ENCODE measurements at regions of chr1 and their contacts with region 1.

Region 1: DNA sequence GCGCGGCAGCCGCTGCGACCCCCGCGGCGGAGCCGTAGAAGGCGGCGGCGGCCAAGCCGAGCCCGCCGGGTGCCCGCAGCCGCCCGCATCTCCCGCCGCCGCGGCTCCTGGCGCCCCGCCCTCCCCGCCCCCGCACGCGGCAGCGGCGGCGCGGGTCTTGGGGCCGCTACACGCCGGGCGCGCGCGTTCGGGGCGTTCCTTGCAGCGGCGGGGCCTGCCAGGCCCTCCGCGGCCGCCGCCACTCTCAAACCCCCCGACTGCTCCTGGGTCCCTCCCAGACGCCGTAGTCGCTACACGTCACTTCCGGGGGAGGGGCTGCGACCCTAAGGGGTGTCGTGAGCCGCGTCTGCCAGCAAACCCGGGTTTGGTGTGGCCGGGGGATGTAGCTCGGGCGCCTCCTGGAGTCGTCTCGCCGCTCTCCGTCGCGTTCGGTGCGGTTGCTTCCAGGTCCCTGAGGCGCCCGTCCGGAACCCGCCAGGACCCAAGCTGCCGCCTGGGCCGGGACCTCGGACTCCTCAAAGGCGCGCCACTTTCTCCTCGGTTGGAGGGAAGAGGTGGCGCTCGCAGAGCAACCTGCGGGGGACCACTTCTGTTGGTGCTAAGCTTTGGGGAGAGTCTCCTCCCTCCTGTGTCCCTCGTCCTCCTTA is at the start of gene ELK4:
- DNase-seq: peak; percentile 100
- ATAC-seq: peak; percentile 84
- H3K4me3 Mint-ChIP-seq: peak within 1 kb of the TSS; percentile 95
- H3K27ac Mint-ChIP-seq: peak within 1 kb of the TSS; percentile 99
- H3K4me1 Mint-ChIP-seq: peaks cover 32% of the 10 kb centered on the region
- H3K27me3 Mint-ChIP-seq: no peaks in the 10 kb centered on the region
- total RNA-seq, gene ELK4: 54.0 to 57.4 TPM

Region 2: DNA sequence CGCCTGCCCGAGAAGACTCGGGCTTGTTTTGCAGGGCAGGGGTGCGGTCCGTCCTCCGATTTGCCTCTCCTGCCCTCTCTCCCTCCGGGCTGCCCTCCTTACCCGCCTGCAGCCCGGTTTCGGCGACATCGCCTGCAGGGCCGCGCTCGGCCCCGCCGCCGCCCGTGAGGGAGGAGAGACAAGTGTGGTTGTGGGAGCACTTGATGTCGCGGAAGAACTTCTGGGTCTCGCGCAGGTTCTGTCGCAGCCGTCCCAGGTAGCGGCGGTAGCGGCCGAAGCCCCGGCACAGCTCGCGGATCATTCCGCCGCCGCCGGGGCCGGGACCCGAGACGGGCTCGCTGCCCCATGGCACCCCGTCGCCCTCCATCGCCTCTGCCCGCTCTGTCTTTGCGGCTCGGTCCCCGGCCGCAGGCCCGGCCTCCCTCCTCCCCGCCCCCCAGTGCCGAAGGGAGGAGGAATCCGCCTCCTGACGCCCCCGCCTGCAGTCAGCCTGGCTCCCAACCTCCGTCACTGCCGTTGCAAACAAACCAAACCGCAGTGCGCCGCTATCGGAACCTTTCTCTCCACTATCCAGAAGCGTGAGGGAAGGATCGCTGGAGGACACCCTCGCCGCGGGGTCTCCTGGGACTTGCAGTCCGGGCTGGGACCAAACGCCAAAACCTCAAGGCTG is 420.5 kb before region 1 on chr1 and contains the start of gene DSTYK:
- CTCF ChIA-PET with region 1: no interaction called
- POLR2A ChIA-PET with region 1: no interaction called
- intact Hi-C with region 1: loop called in 1 of 2 experiments (anchors 1 kb)
- DNase-seq: peak; percentile 97
- ATAC-seq: peak; percentile 90
- H3K4me3 Mint-ChIP-seq: peak within 1 kb of the TSS; percentile 97
- H3K27ac Mint-ChIP-seq: peak within 1 kb of the TSS; percentile 95
- H3K4me1 Mint-ChIP-seq: peaks cover 54% of the 10 kb centered on the region
- H3K27me3 Mint-ChIP-seq: no peaks in the 10 kb centered on the region
- total RNA-seq, gene DSTYK: 9.4 to 12.3 TPM

Region 3: DNA sequence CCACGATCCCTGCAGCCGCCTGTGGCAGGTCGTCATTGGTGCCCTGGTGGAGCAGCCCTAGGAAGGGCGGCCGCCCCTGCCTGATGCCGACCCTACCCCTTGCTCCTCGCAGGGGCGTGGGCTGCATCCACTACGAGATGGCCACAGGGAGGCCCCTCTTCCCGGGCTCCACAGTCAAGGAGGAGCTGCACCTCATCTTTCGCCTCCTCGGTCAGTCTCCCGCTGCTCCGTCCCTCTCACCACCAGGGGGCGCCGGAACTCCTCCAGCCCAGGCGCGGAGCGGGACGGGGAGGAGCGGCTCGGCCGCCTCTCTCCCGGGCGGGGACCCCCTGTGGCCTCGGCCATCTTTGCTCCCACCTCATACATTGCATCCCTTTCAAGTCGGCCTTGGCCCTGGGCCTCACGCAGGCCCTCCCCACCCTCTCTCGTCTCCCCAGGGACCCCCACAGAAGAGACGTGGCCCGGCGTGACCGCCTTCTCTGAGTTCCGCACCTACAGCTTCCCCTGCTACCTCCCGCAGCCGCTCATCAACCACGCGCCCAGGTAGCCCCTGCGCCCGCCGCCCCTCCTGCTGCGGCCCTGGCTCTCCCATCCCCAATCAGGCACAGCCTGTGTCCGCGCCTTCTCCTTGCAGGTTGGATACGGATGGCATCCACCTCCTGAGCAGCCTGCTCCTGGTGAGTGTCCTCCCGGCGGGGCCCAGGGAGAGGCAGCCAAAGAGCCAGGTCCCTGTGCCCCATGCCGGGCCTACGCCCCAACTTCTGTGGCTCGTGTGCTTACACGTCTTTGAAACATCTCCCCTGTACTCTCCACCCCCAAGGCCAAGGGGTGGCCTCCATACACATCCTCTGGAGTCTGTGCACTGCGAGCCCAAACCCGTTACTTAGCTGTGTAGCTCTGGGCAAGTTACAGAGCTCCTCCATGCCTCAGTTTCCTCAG is 102.7 kb before region 1 on chr1:
- CTCF ChIA-PET with region 1: interaction called, 8 read pairs
- POLR2A ChIA-PET with region 1: no interaction called
- intact Hi-C with region 1: loop called (anchors 1 kb)
- DNase-seq: peak; percentile 91
- ATAC-seq: peak; percentile 90
- H3K4me3 Mint-ChIP-seq: no peak overlapping the region
- H3K27ac Mint-ChIP-seq: no peak overlapping the region
- H3K4me1 Mint-ChIP-seq: no peaks in the 10 kb centered on the region
- H3K27me3 Mint-ChIP-seq: no peaks in the 10 kb centered on the region

Region 4: GRCh38 chr1:205610036-205610435 is 21.8 kb before region 1 on chr1:
- CTCF ChIA-PET with region 1: interaction called, 5 read pairs
- POLR2A ChIA-PET with region 1: interaction called, 3 read pairs
- intact Hi-C with region 1: loop called in 1 of 2 experiments (anchors 1 kb)
- DNase-seq: no peak
- ATAC-seq: no peak
- H3K4me3 Mint-ChIP-seq: no peak overlapping the region
- H3K27ac Mint-ChIP-seq: peak overlapping the region; percentile 51
- H3K4me1 Mint-ChIP-seq: peaks cover 44% of the 10 kb centered on the region
- H3K27me3 Mint-ChIP-seq: no peaks in the 10 kb centered on the region

Region 5: GRCh38 chr1:205750138-205751035 is 118.5 kb after region 1 on chr1 and contains the start of gene NUCKS1:
- CTCF ChIA-PET with region 1: interaction called, 3 read pairs
- POLR2A ChIA-PET with region 1: interaction called, 16 read pairs
- intact Hi-C with region 1: loop called (anchors 1 kb)
- DNase-seq: peak; percentile 98
- ATAC-seq: peak; percentile 81
- H3K4me3 Mint-ChIP-seq: peak within 1 kb of the TSS; percentile 87
- H3K27ac Mint-ChIP-seq: peak within 1 kb of the TSS; percentile 96
- H3K4me1 Mint-ChIP-seq: peaks cover 32% of the 10 kb centered on the region
- H3K27me3 Mint-ChIP-seq: no peaks in the 10 kb centered on the region
- total RNA-seq, gene NUCKS1: 189 to 260 TPM

Region 6: GRCh38 chr1:206684478-206685333 is 1052.9 kb after region 1 on chr1 and contains the start of gene MAPKAPK2:
- CTCF ChIA-PET with region 1: no interaction called
- POLR2A ChIA-PET with region 1: no interaction called
- intact Hi-C with region 1: loop called in 1 of 2 experiments (anchors 10 kb)
- DNase-seq: peak; percentile 88
- ATAC-seq: peak; percentile 70
- H3K4me3 Mint-ChIP-seq: peak within 1 kb of the TSS; percentile 98
- H3K27ac Mint-ChIP-seq: peak within 1 kb of the TSS; percentile 94
- H3K4me1 Mint-ChIP-seq: peaks cover 66% of the 10 kb centered on the region
- H3K27me3 Mint-ChIP-seq: peaks cover 2% of the 10 kb centered on the region
- total RNA-seq, gene MAPKAPK2: 62.8 to 64.7 TPM

Measured in activated CD4-positive, alpha-beta T cell treated with anti-CD3 and anti-CD28 coated beads for 36 hours (primary cell).